ENCODE measurements at regions of chr12 and their contacts with region 1.

Region 1: GRCh38 chr12:68231229-68231628 is 5.6 kb upstream of the IL26 start:
- DNase-seq: no peak
- H3K4me3 ChIP-seq: no peak overlapping the region
- H3K27ac ChIP-seq: no peak overlapping the region
- H3K4me1 ChIP-seq: no peaks in the 10 kb centered on the region
- H3K27me3 ChIP-seq: no peaks in the 10 kb centered on the region
- CTCF ChIP-seq: no peak

Region 2: DNA sequence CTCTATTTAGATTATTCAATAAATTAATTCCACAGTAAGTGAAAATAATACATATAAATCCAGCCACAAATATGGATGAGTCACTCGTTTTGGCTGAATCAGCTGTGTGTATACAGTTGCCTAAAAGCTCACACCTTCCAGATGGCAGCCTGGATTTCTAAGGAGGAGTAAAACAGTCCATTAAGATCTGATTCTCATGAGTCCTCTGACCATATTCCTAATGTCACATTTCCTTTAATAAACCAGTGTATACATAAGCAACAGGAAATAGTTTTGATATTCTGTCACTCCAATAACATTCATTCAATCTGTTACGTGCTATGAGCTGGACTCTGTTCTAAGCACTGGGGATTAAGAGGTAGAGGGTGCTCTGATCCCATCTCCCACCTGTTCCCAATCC is 79.1 kb after region 1 on chr12:
- CTCF ChIA-PET with region 1: no interaction called
- dilution Hi-C with region 1: no loop called
- in situ Hi-C with region 1: loop called in 1 of 2 experiments (anchors 5 kb)
- intact Hi-C with region 1: no loop called
- DNase-seq: peak; percentile 78
- H3K4me3 ChIP-seq: no peak overlapping the region
- H3K27ac ChIP-seq: no peak overlapping the region
- H3K4me1 ChIP-seq: peaks cover 5% of the 10 kb centered on the region
- H3K27me3 ChIP-seq: no peaks in the 10 kb centered on the region
- CTCF ChIP-seq: no peak

Region 3: GRCh38 chr12:68326716-68327115 is 95.5 kb after region 1 on chr12:
- CTCF ChIA-PET with region 1: no interaction called
- dilution Hi-C with region 1: loop called (anchors 5 kb)
- in situ Hi-C with region 1: no loop called
- intact Hi-C with region 1: no loop called
- DNase-seq: no peak
- H3K4me3 ChIP-seq: no peak overlapping the region
- H3K27ac ChIP-seq: no peak overlapping the region
- H3K4me1 ChIP-seq: peaks cover 8% of the 10 kb centered on the region
- H3K27me3 ChIP-seq: no peaks in the 10 kb centered on the region
- CTCF ChIP-seq: no peak